SK-N-SH (cell line): ENCODE measurements at regions of chr11 and their contacts with region 1.

Region 1: DNA sequence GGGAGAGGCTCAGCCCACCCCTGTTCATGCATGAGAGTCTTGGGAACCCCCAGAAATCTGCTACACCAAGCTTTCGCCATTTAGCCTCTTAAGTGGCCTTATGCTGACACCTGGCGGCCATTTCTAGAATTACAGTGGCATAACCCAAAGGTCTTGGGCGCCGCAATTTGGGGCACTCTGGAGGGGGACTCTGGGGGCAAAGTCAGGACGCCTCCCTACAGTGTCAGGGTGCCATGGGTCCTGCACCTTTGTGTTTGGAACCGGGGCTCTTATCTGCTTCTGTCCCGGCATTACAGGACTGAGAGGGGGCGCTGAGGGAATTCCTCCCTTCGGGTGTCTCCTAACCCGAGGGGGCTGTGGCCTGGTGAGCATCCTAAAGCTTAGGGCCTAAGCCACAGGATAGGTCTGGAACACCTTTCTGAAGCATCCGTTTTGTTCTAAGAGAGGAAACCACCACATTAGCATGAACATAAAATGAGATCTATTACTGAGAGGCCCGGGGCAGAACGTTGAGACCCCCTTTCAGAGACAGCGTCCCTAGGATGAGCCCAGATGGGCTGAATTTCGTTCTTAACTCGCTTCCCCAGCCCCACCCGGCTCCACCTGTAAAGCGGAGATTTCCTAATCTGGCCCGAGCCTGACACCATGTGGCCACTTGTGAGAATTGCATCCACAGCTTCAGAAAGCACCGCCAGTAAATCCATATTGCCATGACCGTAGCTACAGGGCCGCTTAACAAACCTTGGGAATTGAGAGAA is 9.3 kb downstream of the INS start:
- DNase-seq: peak; percentile 90
- H3K4me3 ChIP-seq: peak overlapping the region in 1 of 2 experiments; percentile 5; a peak in 1 of 4 replicates
- H3K27ac ChIP-seq: peak overlapping the region in 1 of 2 experiments; percentile 4; a peak in 1 of 4 replicates
- H3K4me1 ChIP-seq: peaks cover 0 to 21% of the 10 kb centered on the region in 2 experiments; a peak in 1 of 4 replicates
- H3K27me3 ChIP-seq: peaks cover 28% of the 10 kb centered on the region
- CTCF ChIP-seq: peak; percentile 70
- EP300 ChIP-seq: no peak
- RAD21 ChIP-seq: peak; percentile 85

Region 2: DNA sequence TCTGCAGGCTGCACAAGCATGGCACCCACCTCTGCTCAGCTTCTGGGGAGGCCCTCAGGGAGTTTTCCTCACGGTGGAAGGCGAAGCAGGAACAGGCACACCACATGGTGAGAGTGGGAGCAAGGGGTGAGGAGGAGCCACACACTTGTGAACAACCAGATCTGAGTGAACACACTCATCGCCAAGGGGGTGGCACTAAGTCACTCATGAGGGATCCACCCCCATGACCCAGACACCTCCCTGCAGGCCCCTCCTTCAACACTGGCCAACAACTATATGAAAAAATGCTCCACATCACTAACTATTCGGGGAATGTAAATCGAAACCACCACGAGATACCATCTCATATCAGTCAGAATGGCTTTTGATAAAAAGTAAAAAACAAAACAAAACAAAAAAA is 552.9 kb before region 1 on chr11:
- CTCF ChIA-PET with region 1: interaction called, 10 read pairs
- POLR2A ChIA-PET with region 1: no interaction called
- DNase-seq: no peak
- H3K4me3 ChIP-seq: no peak overlapping the region
- H3K27ac ChIP-seq: no peak overlapping the region
- H3K4me1 ChIP-seq: no peaks in the 10 kb centered on the region
- H3K27me3 ChIP-seq: peaks cover 22% of the 10 kb centered on the region
- CTCF ChIP-seq: no peak
- EP300 ChIP-seq: no peak
- RAD21 ChIP-seq: no peak

Region 3: GRCh38 chr11:1845561-1846452 is 305.9 kb before region 1 on chr11:
- CTCF ChIA-PET with region 1: interaction called, 478 read pairs
- POLR2A ChIA-PET with region 1: no interaction called
- DNase-seq: no peak
- H3K4me3 ChIP-seq: no peak overlapping the region
- H3K27ac ChIP-seq: no peak overlapping the region
- H3K4me1 ChIP-seq: peaks cover 0 to 2% of the 10 kb centered on the region in 2 experiments; a peak in 1 of 4 replicates
- H3K27me3 ChIP-seq: no peaks in the 10 kb centered on the region
- CTCF ChIP-seq: no peak
- EP300 ChIP-seq: no peak
- RAD21 ChIP-seq: no peak

Region 4: GRCh38 chr11:1908618-1909017 is 243.1 kb before region 1 on chr11:
- CTCF ChIA-PET with region 1: interaction called, 12 read pairs
- POLR2A ChIA-PET with region 1: no interaction called
- DNase-seq: no peak
- H3K4me3 ChIP-seq: no peak overlapping the region
- H3K27ac ChIP-seq: no peak overlapping the region
- H3K4me1 ChIP-seq: no peaks in the 10 kb centered on the region; a peak in 1 of 4 replicates
- H3K27me3 ChIP-seq: 0 out of 2 replicates have a peak, but pooled peaks cover 17% of the 10 kb centered on the region
- CTCF ChIP-seq: no peak
- EP300 ChIP-seq: no peak
- RAD21 ChIP-seq: no peak

Region 5: DNA sequence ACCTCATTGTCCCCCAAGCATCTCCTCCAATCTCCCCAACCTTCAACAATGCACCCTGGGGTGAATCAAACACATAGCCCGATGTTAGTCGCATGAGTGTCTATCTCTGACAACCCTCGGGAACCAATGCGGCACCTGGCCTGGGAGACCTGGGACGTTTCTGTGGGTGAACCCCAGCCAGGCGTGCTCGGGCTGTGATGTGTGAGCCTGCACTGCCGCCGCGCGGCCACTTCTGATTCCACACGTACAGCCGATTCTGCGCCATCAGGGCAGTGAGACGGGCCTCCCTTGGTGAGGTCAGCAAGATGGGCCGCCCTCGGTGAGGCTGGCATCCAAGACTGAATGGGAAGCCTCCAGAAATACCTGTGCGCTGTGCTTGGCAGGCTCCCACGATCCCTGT is 148.9 kb before region 1 on chr11:
- CTCF ChIA-PET with region 1: interaction called, 12 read pairs
- POLR2A ChIA-PET with region 1: no interaction called
- DNase-seq: no peak
- H3K4me3 ChIP-seq: no peak overlapping the region
- H3K27ac ChIP-seq: no peak overlapping the region
- H3K4me1 ChIP-seq: no peaks in the 10 kb centered on the region
- H3K27me3 ChIP-seq: no peaks in the 10 kb centered on the region
- CTCF ChIP-seq: no peak
- EP300 ChIP-seq: no peak
- RAD21 ChIP-seq: no peak

Region 6: GRCh38 chr11:2128130-2128510 is 23.6 kb before region 1 on chr11:
- CTCF ChIA-PET with region 1: interaction called, 68 read pairs
- POLR2A ChIA-PET with region 1: no interaction called
- DNase-seq: no peak
- H3K4me3 ChIP-seq: no peak overlapping the region
- H3K27ac ChIP-seq: no peak overlapping the region
- H3K4me1 ChIP-seq: peaks cover 0 to 5% of the 10 kb centered on the region in 2 experiments; a peak in 1 of 4 replicates
- H3K27me3 ChIP-seq: no peaks in the 10 kb centered on the region
- CTCF ChIP-seq: no peak
- EP300 ChIP-seq: no peak
- RAD21 ChIP-seq: no peak

Region 7: DNA sequence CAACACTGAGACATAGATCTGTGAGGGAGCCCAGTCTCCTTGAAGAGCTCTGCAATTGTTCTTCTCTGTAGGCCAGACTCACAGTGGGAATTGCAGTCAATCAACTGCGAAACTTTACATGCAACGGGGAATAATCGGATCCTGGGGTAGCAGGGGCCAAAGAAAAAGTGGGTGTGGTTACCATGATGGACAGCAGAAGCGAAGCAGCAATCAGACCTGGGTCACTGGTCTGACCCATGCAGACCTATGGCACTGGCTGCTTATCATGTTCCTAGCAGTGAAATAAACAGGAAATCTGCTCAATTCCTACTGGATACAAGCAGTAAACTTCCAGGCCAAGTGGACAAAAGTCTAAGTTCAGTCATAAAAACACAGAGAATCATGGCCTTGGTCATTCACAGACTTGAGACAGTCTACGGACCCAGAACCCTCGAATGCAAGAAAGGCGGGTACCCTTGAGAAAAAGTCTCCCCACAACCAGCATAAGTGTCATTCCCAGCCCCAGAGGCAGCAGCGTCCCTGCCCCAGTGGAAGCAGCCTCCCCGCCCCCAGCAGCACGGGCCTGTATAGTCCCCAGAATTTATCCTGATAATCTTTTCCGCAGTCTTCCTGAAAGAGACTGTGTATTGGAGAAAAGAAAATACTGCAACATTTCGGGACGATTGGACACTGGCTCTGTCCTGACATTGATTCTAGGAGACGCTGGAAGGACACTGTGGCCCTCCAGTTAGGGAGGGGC is 84.1 kb after region 1 on chr11:
- CTCF ChIA-PET with region 1: no interaction called
- POLR2A ChIA-PET with region 1: no interaction called
- DNase-seq: no peak
- H3K4me3 ChIP-seq: no peak overlapping the region
- H3K27ac ChIP-seq: no peak overlapping the region
- H3K4me1 ChIP-seq: no peaks in the 10 kb centered on the region
- H3K27me3 ChIP-seq: no peaks in the 10 kb centered on the region
- CTCF ChIP-seq: no peak
- EP300 ChIP-seq: no peak
- RAD21 ChIP-seq: no peak

Region 8: GRCh38 chr11:2355000-2355644 is 203.4 kb after region 1 on chr11:
- CTCF ChIA-PET with region 1: no interaction called
- POLR2A ChIA-PET with region 1: no interaction called
- DNase-seq: no peak
- H3K4me3 ChIP-seq: no peak overlapping the region
- H3K27ac ChIP-seq: no peak overlapping the region
- H3K4me1 ChIP-seq: no peaks in the 10 kb centered on the region
- H3K27me3 ChIP-seq: no peaks in the 10 kb centered on the region
- CTCF ChIP-seq: no peak
- EP300 ChIP-seq: no peak
- RAD21 ChIP-seq: no peak

Region 9: GRCh38 chr11:2420502-2421225 is 269.0 kb after region 1 on chr11:
- CTCF ChIA-PET with region 1: interaction called, 39 read pairs
- POLR2A ChIA-PET with region 1: no interaction called
- DNase-seq: peak; percentile 99
- H3K4me3 ChIP-seq: no peak overlapping the region; a peak in 1 of 4 replicates
- H3K27ac ChIP-seq: no peak overlapping the region
- H3K4me1 ChIP-seq: no peaks in the 10 kb centered on the region; a peak in 1 of 4 replicates
- H3K27me3 ChIP-seq: no peaks in the 10 kb centered on the region
- CTCF ChIP-seq: peak; percentile 85
- EP300 ChIP-seq: no peak
- RAD21 ChIP-seq: peak; percentile 91